ENCODE measurements at regions of chr16 and their contacts with region 1.

Region 1: GRCh38 chr16:15874745-15875314 is 13.6 kb downstream of the CEP20 start:
- DNase-seq: peak; percentile 84
- H3K4me3 ChIP-seq: no peak overlapping the region
- H3K27ac ChIP-seq: no peak overlapping the region
- H3K4me1 ChIP-seq: peaks cover 9% of the 10 kb centered on the region
- H3K27me3 ChIP-seq: no peaks in the 10 kb centered on the region
- CTCF ChIP-seq: peak; percentile 83 to 87
- POLR2A ChIP-seq: no peak

Region 2: DNA sequence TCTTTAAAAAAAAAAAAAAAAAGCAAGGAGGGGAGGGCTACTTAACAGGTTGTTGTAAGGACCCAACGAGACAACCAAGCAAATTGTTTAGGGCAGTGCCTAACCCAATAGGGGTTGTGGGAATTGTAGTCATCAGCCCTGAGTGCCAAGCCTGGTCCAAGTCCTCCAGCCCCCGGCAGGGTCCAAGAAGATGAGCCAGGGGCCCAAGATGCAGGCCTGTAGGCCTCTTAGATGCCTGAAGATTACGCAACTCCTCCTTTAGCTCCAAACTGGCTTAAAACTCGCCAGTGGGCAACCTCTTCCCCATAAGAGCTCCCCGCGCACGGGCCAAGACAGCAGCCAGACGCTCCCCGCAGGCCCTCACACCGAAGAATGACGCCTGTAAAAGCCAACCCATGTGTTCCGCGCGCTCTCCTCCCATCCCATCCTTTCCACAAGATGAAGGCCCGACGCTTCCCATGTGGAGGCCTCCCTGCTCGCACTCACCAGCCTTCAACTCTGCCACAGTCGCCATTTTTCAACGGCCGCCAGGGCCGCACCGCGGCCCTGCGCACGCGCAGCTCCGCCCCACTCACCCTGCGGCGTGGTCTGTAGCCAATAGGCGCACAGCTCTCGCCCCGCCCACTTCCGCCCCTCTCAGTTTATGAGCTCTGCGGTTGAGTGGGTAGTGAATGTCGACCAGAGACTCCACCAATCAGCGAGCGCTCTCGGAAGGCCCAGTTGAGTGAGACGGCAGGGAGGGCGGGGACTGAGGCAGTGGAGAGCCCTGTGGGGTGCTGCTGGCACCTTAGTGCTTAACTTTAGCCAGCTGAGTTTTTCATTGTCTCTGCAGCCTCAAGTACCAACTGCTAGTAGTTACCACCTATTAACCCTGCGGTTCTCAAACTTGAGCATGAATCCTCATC is 13.5 kb after region 1 on chr16 and contains the start of gene CEP20:
- CTCF ChIA-PET with region 1: interaction called, 43 read pairs
- POLR2A ChIA-PET with region 1: interaction called, 6 read pairs
- dilution Hi-C with region 1: no loop called
- intact Hi-C with region 1: no loop called
- DNase-seq: peak; percentile 99
- H3K4me3 ChIP-seq: peak within 1 kb of the TSS; percentile 55 to 97 (median 94)
- H3K27ac ChIP-seq: peak within 1 kb of the TSS; percentile 73
- H3K4me1 ChIP-seq: peaks cover 15% of the 10 kb centered on the region
- H3K27me3 ChIP-seq: no peaks in the 10 kb centered on the region
- CTCF ChIP-seq: peak in 1 of 2 donors; percentile 18
- POLR2A ChIP-seq: peak; percentile 71
- total RNA-seq, gene CEP20: 28.0 and 30.5 TPM in 2 replicates

Region 3: GRCh38 chr16:15913046-15913698 is 38.3 kb after region 1 on chr16:
- CTCF ChIA-PET with region 1: no interaction called
- POLR2A ChIA-PET with region 1: no interaction called
- dilution Hi-C with region 1: no loop called
- intact Hi-C with region 1: no loop called
- DNase-seq: no peak
- H3K4me3 ChIP-seq: no peak overlapping the region
- H3K27ac ChIP-seq: no peak overlapping the region
- H3K4me1 ChIP-seq: no peaks in the 10 kb centered on the region
- H3K27me3 ChIP-seq: peaks cover 0 to 2% of the 10 kb centered on the region in 2 experiments
- CTCF ChIP-seq: no peak
- POLR2A ChIP-seq: no peak

Region 4: GRCh38 chr16:15966420-15967222 is 91.8 kb after region 1 on chr16:
- CTCF ChIA-PET with region 1: interaction called, 10 read pairs
- POLR2A ChIA-PET with region 1: no interaction called
- dilution Hi-C with region 1: no loop called
- intact Hi-C with region 1: no loop called
- DNase-seq: peak; percentile 37
- H3K4me3 ChIP-seq: no peak overlapping the region
- H3K27ac ChIP-seq: no peak overlapping the region
- H3K4me1 ChIP-seq: peaks cover 37% of the 10 kb centered on the region
- H3K27me3 ChIP-seq: no peaks in the 10 kb centered on the region
- CTCF ChIP-seq: no peak
- POLR2A ChIP-seq: no peak

Region 5: GRCh38 chr16:16021988-16022682 is 147.3 kb after region 1 on chr16:
- CTCF ChIA-PET with region 1: interaction called, 37 read pairs
- POLR2A ChIA-PET with region 1: interaction called, 3 read pairs
- dilution Hi-C with region 1: no loop called
- intact Hi-C with region 1: loop called (anchors 5 kb)
- DNase-seq: peak; percentile 96
- H3K4me3 ChIP-seq: no peak overlapping the region
- H3K27ac ChIP-seq: peak overlapping the region; percentile 91
- H3K4me1 ChIP-seq: peaks cover 35% of the 10 kb centered on the region
- H3K27me3 ChIP-seq: no peaks in the 10 kb centered on the region
- CTCF ChIP-seq: no peak
- POLR2A ChIP-seq: peak; percentile 33

Region 6: DNA sequence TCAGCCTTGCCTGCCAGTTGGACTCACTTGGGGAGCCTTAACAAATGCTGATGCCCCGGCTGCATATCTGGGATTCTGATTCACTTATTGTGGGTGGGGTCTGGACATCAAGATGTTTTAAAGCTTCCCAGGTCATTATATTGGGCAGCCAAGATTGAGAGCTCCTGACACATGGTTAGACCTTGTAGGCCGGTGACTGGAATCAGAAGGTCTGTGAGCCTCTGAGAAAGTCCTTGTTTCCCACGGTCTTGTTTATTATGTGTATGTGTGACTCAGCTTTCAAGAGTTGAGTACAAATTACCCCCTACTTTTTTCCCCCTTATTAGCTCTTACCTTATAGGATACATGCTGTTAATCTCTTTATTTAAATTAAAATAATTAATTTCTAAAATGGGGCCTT is 178.1 kb after region 1 on chr16:
- CTCF ChIA-PET with region 1: interaction called, 20 read pairs
- POLR2A ChIA-PET with region 1: no interaction called
- dilution Hi-C with region 1: no loop called
- intact Hi-C with region 1: no loop called
- DNase-seq: peak; percentile 13
- H3K4me3 ChIP-seq: no peak overlapping the region
- H3K27ac ChIP-seq: no peak overlapping the region
- H3K4me1 ChIP-seq: no peaks in the 10 kb centered on the region
- H3K27me3 ChIP-seq: no peaks in the 10 kb centered on the region
- CTCF ChIP-seq: no peak
- POLR2A ChIP-seq: no peak

Region 7: GRCh38 chr16:16120382-16121184 is 245.8 kb after region 1 on chr16:
- CTCF ChIA-PET with region 1: interaction called, 19 read pairs
- POLR2A ChIA-PET with region 1: no interaction called
- dilution Hi-C with region 1: no loop called
- intact Hi-C with region 1: no loop called
- DNase-seq: peak; percentile 98
- H3K4me3 ChIP-seq: peak overlapping the region in 1 of 3 experiments; percentile 4
- H3K27ac ChIP-seq: peak overlapping the region; percentile 83
- H3K4me1 ChIP-seq: peaks cover 19% of the 10 kb centered on the region
- H3K27me3 ChIP-seq: no peaks in the 10 kb centered on the region
- CTCF ChIP-seq: no peak
- POLR2A ChIP-seq: peak; percentile 81

Region 8: GRCh38 chr16:16150117-16150877 is 275.5 kb after region 1 on chr16:
- CTCF ChIA-PET with region 1: no interaction called
- POLR2A ChIA-PET with region 1: no interaction called
- dilution Hi-C with region 1: no loop called
- intact Hi-C with region 1: no loop called
- DNase-seq: peak; percentile 58
- H3K4me3 ChIP-seq: no peak overlapping the region
- H3K27ac ChIP-seq: no peak overlapping the region
- H3K4me1 ChIP-seq: no peaks in the 10 kb centered on the region
- H3K27me3 ChIP-seq: no peaks in the 10 kb centered on the region
- CTCF ChIP-seq: no peak
- POLR2A ChIP-seq: no peak

Measured in endothelial cell of umbilical vein (primary cell).